Heart right ventricle (tissue), 16 donors: ENCODE measurements at regions of chr4 and their contacts with region 1.

Region 1: GRCh38 chr4:155758481-155759404 is at the start of gene GUCY1B1:
- DNase-seq: peak; percentile 95 to 97
- ATAC-seq: peak; percentile 96 to 99 (median 98)
- H3K4me3 ChIP-seq: peak within 1 kb of the TSS; percentile 70 to 90 (median 78)
- H3K27ac ChIP-seq: peak within 1 kb of the TSS; percentile 84 to 96 (median 92)
- H3K4me1 ChIP-seq: peaks cover 0 to 31% (median 12%) of the 10 kb centered on the region in 9 donors
- H3K27me3 ChIP-seq: peaks cover 0 to 19% (median 0%) of the 10 kb centered on the region in 7 donors
- CTCF ChIP-seq: peak; percentile 28 to 76 (median 57)
- total RNA-seq, gene GUCY1B1: 10.7 to 29.9 (median 17.1) TPM

Region 2: GRCh38 chr4:155705664-155706063 is 53.1 kb before region 1 on chr4:
- intact Hi-C with region 1: loop called in 1 of 10 experiments (anchors 2 kb)
- DNase-seq: no peak
- ATAC-seq: peak in 7 of 8 donors; percentile 49 to 89 (median 67)
- H3K4me3 ChIP-seq: no peak overlapping the region
- H3K27ac ChIP-seq: peak overlapping the region in 4 of 10 donors; percentile 8 to 34 (median 19)
- H3K4me1 ChIP-seq: peaks cover 0 to 54% (median 21%) of the 10 kb centered on the region in 9 donors
- H3K27me3 ChIP-seq: no peaks in the 10 kb centered on the region
- CTCF ChIP-seq: no peak